Mammary epithelial cell (primary cell): ENCODE measurements at regions of chr5 and their contacts with region 1.

Region 1: GRCh38 chr5:137220523-137220927 is 278.6 kb downstream of the SPOCK1 start:
- DNase-seq: peak; percentile 96
- H3K4me3 ChIP-seq: no peak overlapping the region
- H3K27ac ChIP-seq: no peak overlapping the region
- H3K4me1 ChIP-seq: peaks cover 35% of the 10 kb centered on the region
- H3K27me3 ChIP-seq: no peaks in the 10 kb centered on the region
- CTCF ChIP-seq: peak; percentile 82 to 83

Region 2: GRCh38 chr5:136802383-136802782 is 418.1 kb before region 1 on chr5:
- CTCF ChIA-PET with region 1: no interaction called
- dilution Hi-C with region 1: no loop called
- in situ Hi-C with region 1: loop called in 1 of 2 experiments (anchors 25 kb)
- intact Hi-C with region 1: loop called (anchors 1 kb)
- DNase-seq: peak; percentile 14
- H3K4me3 ChIP-seq: no peak overlapping the region
- H3K27ac ChIP-seq: no peak overlapping the region
- H3K4me1 ChIP-seq: peaks cover 7% of the 10 kb centered on the region
- H3K27me3 ChIP-seq: no peaks in the 10 kb centered on the region
- CTCF ChIP-seq: peak; percentile 10 to 54

Region 3: GRCh38 chr5:136811551-136811950 is 409.0 kb before region 1 on chr5:
- CTCF ChIA-PET with region 1: no interaction called
- dilution Hi-C with region 1: no loop called
- in situ Hi-C with region 1: loop called in 1 of 2 experiments (anchors 25 kb)
- intact Hi-C with region 1: loop called (anchors 2 kb)
- DNase-seq: peak; percentile 71
- H3K4me3 ChIP-seq: no peak overlapping the region
- H3K27ac ChIP-seq: no peak overlapping the region
- H3K4me1 ChIP-seq: peaks cover 14% of the 10 kb centered on the region
- H3K27me3 ChIP-seq: no peaks in the 10 kb centered on the region
- CTCF ChIP-seq: no peak

Region 4: GRCh38 chr5:137075163-137075970 is 145.2 kb before region 1 on chr5:
- CTCF ChIA-PET with region 1: interaction called, 13 read pairs
- dilution Hi-C with region 1: no loop called
- in situ Hi-C with region 1: loop called (anchors 5 to 10 kb)
- intact Hi-C with region 1: loop called (anchors 1 kb)
- DNase-seq: peak; percentile 78
- H3K4me3 ChIP-seq: no peak overlapping the region
- H3K27ac ChIP-seq: peak overlapping the region; percentile 22
- H3K4me1 ChIP-seq: peaks cover 21% of the 10 kb centered on the region
- H3K27me3 ChIP-seq: no peaks in the 10 kb centered on the region
- CTCF ChIP-seq: peak; percentile 94

Region 5: DNA sequence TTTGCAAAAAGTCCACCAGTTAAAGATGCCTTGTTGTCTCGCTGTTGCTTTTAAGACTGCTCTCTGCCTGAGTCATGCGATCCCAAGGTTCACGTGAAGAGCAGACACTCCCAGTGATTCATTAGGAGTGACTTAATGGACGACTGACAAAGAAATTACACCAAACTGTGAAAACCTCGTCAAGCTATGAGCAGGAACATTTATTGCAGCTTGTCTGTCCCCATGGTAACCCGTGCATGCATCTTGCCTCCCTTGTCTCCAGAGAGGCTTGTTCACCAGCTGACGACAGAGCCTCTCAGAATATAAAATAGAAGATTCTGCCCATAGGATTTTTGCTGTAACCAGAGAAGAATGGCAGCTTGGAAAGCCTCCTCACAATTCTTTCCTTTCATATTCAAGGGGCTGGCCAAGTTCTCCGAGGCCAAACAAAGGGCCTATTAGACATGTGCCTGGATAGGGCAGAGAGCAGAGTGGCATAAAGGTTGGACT is 74.1 kb before region 1 on chr5:
- CTCF ChIA-PET with region 1: no interaction called
- dilution Hi-C with region 1: no loop called
- in situ Hi-C with region 1: no loop called
- intact Hi-C with region 1: loop called (anchors 1 kb)
- DNase-seq: peak; percentile 99
- H3K4me3 ChIP-seq: peak overlapping the region in 1 of 3 experiments; percentile 32
- H3K27ac ChIP-seq: peak overlapping the region; percentile 97
- H3K4me1 ChIP-seq: peaks cover 40% of the 10 kb centered on the region
- H3K27me3 ChIP-seq: no peaks in the 10 kb centered on the region
- CTCF ChIP-seq: no peak

Region 6: GRCh38 chr5:137201876-137202275 is 18.6 kb before region 1 on chr5:
- CTCF ChIA-PET with region 1: interaction called, 8 read pairs
- dilution Hi-C with region 1: no loop called
- in situ Hi-C with region 1: no loop called
- intact Hi-C with region 1: loop called (anchors 2 kb)
- DNase-seq: peak; percentile 76
- H3K4me3 ChIP-seq: no peak overlapping the region
- H3K27ac ChIP-seq: no peak overlapping the region
- H3K4me1 ChIP-seq: peaks cover 28% of the 10 kb centered on the region
- H3K27me3 ChIP-seq: no peaks in the 10 kb centered on the region
- CTCF ChIP-seq: peak; percentile 27 to 42

Region 7: GRCh38 chr5:137498736-137499505 is 278.4 kb after region 1 on chr5 and contains the start of gene SPOCK1:
- CTCF ChIA-PET with region 1: no interaction called
- dilution Hi-C with region 1: no loop called
- in situ Hi-C with region 1: no loop called
- intact Hi-C with region 1: loop called (anchors 1 kb)
- DNase-seq: peak; percentile 57
- H3K4me3 ChIP-seq: peak within 1 kb of the TSS; percentile 48 to 58 (median 53)
- H3K27ac ChIP-seq: no peak within 1 kb of the TSS
- H3K4me1 ChIP-seq: peaks cover 10% of the 10 kb centered on the region
- H3K27me3 ChIP-seq: peaks cover 4% of the 10 kb centered on the region
- CTCF ChIP-seq: peak; percentile 54 to 58
- total RNA-seq, gene SPOCK1: 13.3 to 14.9 TPM